ENCODE measurements at regions of chr16 and their contacts with region 1.

Region 1: GRCh38 chr16:81632392-81633146 is 146.5 kb upstream of the PLCG2 start:
- DNase-seq: peak; percentile 60 to 95 (median 81)
- ATAC-seq: peak; percentile 84
- H3K4me3 ChIP-seq: no peak overlapping the region
- H3K4me3 Mint-ChIP-seq: peak overlapping the region; percentile 65
- H3K27ac ChIP-seq: peak overlapping the region; percentile 39 to 77
- H3K27ac Mint-ChIP-seq: peak overlapping the region; percentile 96
- H3K4me1 ChIP-seq: peaks cover 27% of the 10 kb centered on the region
- H3K4me1 Mint-ChIP-seq: peaks cover 55% of the 10 kb centered on the region
- H3K27me3 ChIP-seq: no peaks in the 10 kb centered on the region
- H3K27me3 Mint-ChIP-seq: no peaks in the 10 kb centered on the region
- CTCF ChIP-seq: no peak

Region 2: GRCh38 chr16:81469710-81470535 is 162.6 kb before region 1 on chr16:
- CTCF ChIA-PET with region 1: no interaction called
- POLR2A ChIA-PET with region 1: no interaction called
- intact Hi-C with region 1: loop called in 1 of 2 experiments (anchors 10 kb)
- DNase-seq: peak in 7 of 9 experiments; percentile 19 to 80 (median 47)
- ATAC-seq: peak; percentile 88
- H3K4me3 ChIP-seq: peak overlapping the region; percentile 28 to 36
- H3K4me3 Mint-ChIP-seq: peak overlapping the region; percentile 64
- H3K27ac ChIP-seq: peak overlapping the region; percentile 43 to 73
- H3K27ac Mint-ChIP-seq: peak overlapping the region; percentile 91
- H3K4me1 ChIP-seq: peaks cover 67% of the 10 kb centered on the region
- H3K4me1 Mint-ChIP-seq: peaks cover 77% of the 10 kb centered on the region
- H3K27me3 ChIP-seq: no peaks in the 10 kb centered on the region
- H3K27me3 Mint-ChIP-seq: no peaks in the 10 kb centered on the region
- CTCF ChIP-seq: no peak

Region 3: DNA sequence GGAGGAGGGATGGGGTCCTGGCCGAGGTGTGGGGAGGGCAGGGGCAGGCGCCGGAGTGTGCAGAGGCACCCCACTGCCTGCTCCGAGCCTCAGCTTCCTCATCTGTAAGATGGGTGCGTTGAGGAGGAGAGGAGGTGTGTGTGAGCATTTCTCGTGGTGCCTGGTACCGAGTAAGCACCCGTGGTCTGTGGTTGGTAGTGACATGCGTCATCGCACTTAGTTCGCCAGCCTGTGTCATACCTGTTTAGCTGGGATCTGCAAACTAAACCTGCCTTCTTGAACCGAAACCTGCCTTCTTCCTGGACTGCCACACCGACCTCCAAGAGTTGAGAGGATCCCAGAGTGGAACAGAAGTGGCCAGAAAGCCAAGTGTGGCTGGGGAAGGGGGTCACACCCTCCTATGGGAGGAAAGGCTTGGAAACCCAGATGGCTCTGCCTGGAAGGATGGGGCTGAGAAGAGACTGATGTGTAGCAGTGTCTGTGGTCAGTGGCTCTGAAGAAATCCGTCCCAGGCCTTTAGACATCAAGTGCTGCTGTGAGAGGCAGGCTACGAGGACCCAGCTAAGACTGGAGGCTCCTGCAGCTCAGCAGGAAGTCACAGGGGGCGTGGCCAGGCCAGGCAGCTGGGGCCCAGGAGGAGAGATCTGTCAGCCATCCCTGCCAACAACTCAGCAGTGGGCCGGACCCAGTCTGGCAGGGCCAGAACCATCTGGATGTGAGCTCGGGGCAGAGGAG is 16.1 kb before region 1 on chr16:
- CTCF ChIA-PET with region 1: no interaction called
- POLR2A ChIA-PET with region 1: interaction called, 3 read pairs
- intact Hi-C with region 1: loop called (anchors 1 kb)
- DNase-seq: peak; percentile 62 to 95 (median 80)
- ATAC-seq: peak; percentile 90
- H3K4me3 ChIP-seq: peak overlapping the region; percentile 13 to 35
- H3K4me3 Mint-ChIP-seq: peak overlapping the region; percentile 68
- H3K27ac ChIP-seq: peak overlapping the region; percentile 90 to 92
- H3K27ac Mint-ChIP-seq: peak overlapping the region; percentile 97
- H3K4me1 ChIP-seq: peaks cover 23% of the 10 kb centered on the region
- H3K4me1 Mint-ChIP-seq: peaks cover 16% of the 10 kb centered on the region
- H3K27me3 ChIP-seq: no peaks in the 10 kb centered on the region
- H3K27me3 Mint-ChIP-seq: no peaks in the 10 kb centered on the region
- CTCF ChIP-seq: no peak

Region 4: GRCh38 chr16:81715358-81716196 is 83.0 kb after region 1 on chr16:
- CTCF ChIA-PET with region 1: interaction called, 3 read pairs
- POLR2A ChIA-PET with region 1: no interaction called
- intact Hi-C with region 1: loop called in 1 of 2 experiments (anchors 2 kb)
- DNase-seq: peak in 6 of 9 experiments; percentile 11 to 84 (median 42)
- ATAC-seq: peak; percentile 61
- H3K4me3 ChIP-seq: peak overlapping the region; percentile 8 to 26
- H3K4me3 Mint-ChIP-seq: peak overlapping the region; percentile 71
- H3K27ac ChIP-seq: peak overlapping the region in 1 of 2 experiments; percentile 70
- H3K27ac Mint-ChIP-seq: peak overlapping the region; percentile 92
- H3K4me1 ChIP-seq: peaks cover 28% of the 10 kb centered on the region
- H3K4me1 Mint-ChIP-seq: peaks cover 47% of the 10 kb centered on the region
- H3K27me3 ChIP-seq: no peaks in the 10 kb centered on the region
- H3K27me3 Mint-ChIP-seq: no peaks in the 10 kb centered on the region
- CTCF ChIP-seq: no peak

Measured in CD8-positive, alpha-beta T cell (primary cell).